Activated B cell treated with CpG ODN at 0.5 μM for 24 hours (primary cell): ENCODE measurements at regions of chr1 and their contacts with region 1.

Region 1: GRCh38 chr1:15430787-15431570 is 7.3 kb upstream of the CTRC start:
- DNase-seq: peak; percentile 78
- ATAC-seq: peak; percentile 81
- H3K4me3 Mint-ChIP-seq: no peak overlapping the region
- H3K27ac Mint-ChIP-seq: no peak overlapping the region
- H3K4me1 Mint-ChIP-seq: no peaks in the 10 kb centered on the region
- H3K27me3 Mint-ChIP-seq: no peaks in the 10 kb centered on the region
- CTCF ChIP-seq: peak; percentile 71

Region 2: GRCh38 chr1:15064217-15064929 is 366.6 kb before region 1 on chr1:
- CTCF ChIA-PET with region 1: no interaction called
- POLR2A ChIA-PET with region 1: no interaction called
- intact Hi-C with region 1: no loop called
- DNase-seq: no peak
- ATAC-seq: no peak
- H3K4me3 Mint-ChIP-seq: no peak overlapping the region
- H3K27ac Mint-ChIP-seq: no peak overlapping the region
- H3K4me1 Mint-ChIP-seq: no peaks in the 10 kb centered on the region
- H3K27me3 Mint-ChIP-seq: no peaks in the 10 kb centered on the region
- CTCF ChIP-seq: no peak

Region 3: DNA sequence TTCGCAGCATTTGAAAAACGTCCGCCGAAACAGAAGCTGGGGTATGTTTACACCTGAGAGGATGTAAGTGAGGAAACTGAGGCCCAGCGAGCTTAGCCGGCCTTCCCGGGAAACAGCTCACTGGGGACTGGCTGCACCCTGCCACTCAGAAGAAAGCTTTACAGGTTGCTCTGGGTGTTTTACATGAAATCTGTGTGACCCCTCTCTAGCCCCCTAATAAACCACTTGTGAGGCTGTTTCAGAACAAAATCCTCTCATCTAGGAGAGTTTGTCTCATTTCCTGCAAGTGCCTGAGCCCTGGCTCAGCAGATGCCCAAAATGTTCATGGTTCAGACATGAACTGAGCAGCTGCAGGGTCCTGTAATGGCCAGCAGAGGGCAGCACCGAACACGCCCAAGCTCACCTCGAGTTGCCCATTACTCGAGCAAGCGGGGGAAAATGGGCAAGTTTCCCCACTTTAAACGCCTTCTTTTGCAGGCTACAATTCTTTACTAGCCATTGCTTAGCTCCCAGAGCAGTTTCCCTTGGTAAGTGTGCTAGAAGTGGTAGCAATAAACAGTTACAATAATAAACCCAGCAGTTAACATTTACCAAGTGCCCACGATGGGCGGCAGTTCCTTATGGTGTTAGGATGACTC is 107.5 kb before region 1 on chr1:
- CTCF ChIA-PET with region 1: interaction called, 189 read pairs
- POLR2A ChIA-PET with region 1: interaction called, 7 read pairs
- intact Hi-C with region 1: loop called (anchors 1 kb)
- DNase-seq: peak; percentile 46
- ATAC-seq: peak; percentile 87
- H3K4me3 Mint-ChIP-seq: no peak overlapping the region
- H3K27ac Mint-ChIP-seq: no peak overlapping the region
- H3K4me1 Mint-ChIP-seq: no peaks in the 10 kb centered on the region
- H3K27me3 Mint-ChIP-seq: peaks cover 8% of the 10 kb centered on the region
- CTCF ChIP-seq: no peak

Region 4: DNA sequence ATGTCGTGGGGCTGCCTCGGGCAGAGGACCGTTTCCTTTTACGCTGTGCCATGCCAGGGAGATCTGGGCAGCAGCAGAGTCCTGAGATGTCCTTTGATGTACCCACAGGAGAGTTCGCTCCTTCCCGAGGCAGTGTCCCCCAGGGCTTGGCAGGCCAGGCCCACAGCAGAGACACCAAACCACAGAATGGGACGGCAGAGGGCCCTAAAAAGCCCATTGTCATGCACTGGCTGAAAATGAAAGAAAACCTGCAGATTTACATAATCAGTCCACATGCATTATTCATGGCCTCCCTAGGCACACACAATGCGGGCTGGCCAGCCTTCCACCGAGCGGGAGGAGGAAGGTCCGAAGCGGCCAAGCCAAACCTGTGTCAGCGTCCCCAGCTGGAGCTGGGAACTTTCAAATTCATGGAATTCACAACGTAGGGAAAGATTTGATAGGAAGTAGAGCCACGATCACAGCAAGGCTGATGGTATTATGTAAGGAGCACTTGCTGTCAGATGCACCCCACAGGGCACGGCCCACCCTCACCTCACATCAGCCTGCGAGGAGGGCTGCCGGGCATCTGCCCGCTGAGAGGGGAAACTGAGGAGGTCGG is 46.6 kb before region 1 on chr1:
- CTCF ChIA-PET with region 1: interaction called, 6 read pairs
- POLR2A ChIA-PET with region 1: no interaction called
- intact Hi-C with region 1: loop called (anchors 1 kb)
- DNase-seq: no peak
- ATAC-seq: peak; percentile 75
- H3K4me3 Mint-ChIP-seq: peak overlapping the region; percentile 83
- H3K27ac Mint-ChIP-seq: no peak overlapping the region
- H3K4me1 Mint-ChIP-seq: peaks cover 25% of the 10 kb centered on the region
- H3K27me3 Mint-ChIP-seq: peaks cover 14% of the 10 kb centered on the region
- CTCF ChIP-seq: no peak

Region 5: DNA sequence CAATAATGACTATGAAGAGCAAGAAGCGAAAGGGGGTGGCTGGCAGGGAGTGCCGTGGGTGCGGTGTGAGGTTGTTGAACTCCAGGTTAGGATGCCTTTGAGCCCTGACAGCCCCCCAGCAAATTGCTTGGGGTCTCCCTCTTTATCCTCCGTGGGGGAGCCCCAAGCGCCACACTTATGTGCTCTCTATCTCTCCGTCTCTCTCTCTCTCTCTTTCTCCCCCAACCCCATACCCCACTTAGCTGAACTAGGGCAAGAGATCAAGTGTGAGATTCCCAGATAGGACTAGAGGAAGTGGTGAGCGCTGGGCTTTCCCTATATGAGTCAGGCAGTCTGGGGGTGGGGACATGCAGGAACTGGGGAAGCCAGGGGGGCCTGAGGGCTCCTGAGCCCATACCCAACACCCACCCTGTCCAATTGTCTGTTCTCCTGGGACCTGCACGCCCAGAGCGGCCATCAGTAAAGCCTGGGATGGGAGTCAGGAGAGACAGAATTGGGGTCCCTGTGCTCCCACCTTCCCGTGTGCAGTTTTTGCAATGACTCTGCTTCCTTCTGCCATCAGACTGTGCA is 13.5 kb before region 1 on chr1:
- CTCF ChIA-PET with region 1: interaction called, 4 read pairs
- POLR2A ChIA-PET with region 1: interaction called, 3 read pairs
- intact Hi-C with region 1: loop called (anchors 2 kb)
- DNase-seq: peak; percentile 40
- ATAC-seq: peak; percentile 59
- H3K4me3 Mint-ChIP-seq: peak overlapping the region; percentile 61
- H3K27ac Mint-ChIP-seq: peak overlapping the region; percentile 86
- H3K4me1 Mint-ChIP-seq: peaks cover 57% of the 10 kb centered on the region
- H3K27me3 Mint-ChIP-seq: no peaks in the 10 kb centered on the region
- CTCF ChIP-seq: no peak